ENCODE measurements at regions of chr2 and their contacts with region 1.

Region 1: DNA sequence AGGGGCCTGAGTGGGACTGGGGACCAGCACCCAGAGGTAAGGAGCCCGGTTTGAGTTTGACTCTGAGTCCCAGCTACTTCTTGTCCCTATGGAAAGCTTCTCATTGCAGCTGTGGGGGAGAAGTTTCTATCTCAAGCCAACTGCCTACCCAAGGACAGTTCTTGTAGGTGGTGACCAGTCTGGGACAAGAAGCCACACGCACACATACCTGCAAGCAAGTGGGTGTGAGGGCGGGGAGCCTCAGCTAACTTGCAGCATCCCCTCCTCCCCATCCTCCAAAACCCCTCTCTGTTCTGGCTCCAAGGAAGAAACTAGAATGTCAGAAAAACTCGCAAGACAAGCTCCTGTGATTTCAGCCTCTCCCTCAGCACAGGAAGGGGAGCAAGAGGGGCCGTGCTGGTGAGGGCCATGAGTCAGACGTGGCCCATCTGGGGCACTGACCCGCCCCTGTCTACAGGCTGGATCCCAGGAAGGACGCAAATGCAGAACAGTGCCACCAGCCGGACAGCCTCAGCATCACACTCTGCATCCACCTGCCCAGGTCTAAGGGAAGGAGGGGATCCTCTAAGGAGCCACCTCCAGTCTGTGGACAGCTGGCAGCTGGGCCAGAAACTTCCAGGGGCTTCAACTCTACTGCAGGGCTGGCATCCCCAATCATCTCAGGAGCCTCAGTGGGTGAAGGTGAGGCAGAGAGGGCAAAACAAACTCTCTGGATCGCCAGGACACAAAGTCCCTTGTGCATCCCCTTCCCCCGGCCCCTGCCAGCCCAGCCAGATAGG is 103.4 kb downstream of the TNS1 start:
- DNase-seq: peak; percentile 72 to 78 (median 74)
- H3K4me3 ChIP-seq: no peak overlapping the region
- H3K4me3 Mint-ChIP-seq: peak overlapping the region in 1 of 2 donors; percentile 34
- H3K27ac ChIP-seq: peak overlapping the region in 1 of 2 donors; percentile 48
- H3K27ac Mint-ChIP-seq: peak overlapping the region; percentile 42 to 87 (median 75)
- H3K4me1 ChIP-seq: peaks cover 27 to 41% of the 10 kb centered on the region in 2 donors
- H3K4me1 Mint-ChIP-seq: peaks cover 45% of the 10 kb centered on the region
- H3K27me3 ChIP-seq: no peaks in the 10 kb centered on the region
- H3K27me3 Mint-ChIP-seq: peaks cover 0 to 3% (median 2%) of the 10 kb centered on the region in 3 donors
- CTCF ChIP-seq: peak; percentile 66

Region 2: GRCh38 chr2:217934321-217935131 is 35.1 kb after region 1 on chr2:
- intact Hi-C with region 1: loop called (anchors 5 kb)
- DNase-seq: peak; percentile 94 to 97 (median 97)
- H3K4me3 ChIP-seq: peak overlapping the region in 2 of 3 experiments; percentile 16 to 68
- H3K4me3 Mint-ChIP-seq: peak overlapping the region; percentile 80 to 91
- H3K27ac ChIP-seq: peak overlapping the region; percentile 79 to 99
- H3K27ac Mint-ChIP-seq: peak overlapping the region; percentile 95 to 99 (median 97)
- H3K4me1 ChIP-seq: peaks cover 27 to 34% of the 10 kb centered on the region in 2 donors
- H3K4me1 Mint-ChIP-seq: peaks cover 49% of the 10 kb centered on the region
- H3K27me3 ChIP-seq: no peaks in the 10 kb centered on the region
- H3K27me3 Mint-ChIP-seq: peaks cover 6 to 14% (median 10%) of the 10 kb centered on the region in 3 donors
- CTCF ChIP-seq: no peak